AG04450 (cell line): ENCODE measurements at regions of chr1 and their contacts with region 1.

Region 1: GRCh38 chr1:150162862-150163706 is 13.4 kb downstream of the PLEKHO1 start:
- DNase-seq: peak; percentile 99
- H3K4me3 ChIP-seq: peak overlapping the region; percentile 30; the same call in 1 of the 2 replicates
- H3K27ac ChIP-seq: peak overlapping the region; percentile 99
- H3K27me3 ChIP-seq: no peaks in the 10 kb centered on the region
- CTCF ChIP-seq: no peak; the same call in 1 of the 2 replicates

Region 2: DNA sequence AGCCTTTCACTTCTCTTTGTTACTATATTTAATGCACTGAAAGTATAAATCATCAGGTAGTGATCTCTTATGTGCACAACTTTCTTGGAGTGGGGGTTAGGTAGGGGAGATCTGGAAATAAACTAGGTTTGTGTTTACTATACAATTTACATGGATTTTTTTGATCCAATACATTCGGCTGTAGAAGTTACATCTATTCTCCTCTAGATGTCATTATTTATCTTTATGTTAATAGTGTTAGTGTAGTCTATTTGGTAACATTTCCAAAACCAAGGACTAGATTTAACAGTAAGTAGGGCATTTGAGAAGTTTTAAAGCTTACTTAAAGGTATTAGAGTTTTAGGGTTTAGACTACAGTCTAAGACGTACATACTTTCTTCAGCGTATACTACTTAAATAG is 90.1 kb before region 1 on chr1:
- CTCF ChIA-PET with region 1: interaction called, 238 read pairs
- POLR2A ChIA-PET with region 1: interaction called, 4 read pairs
- DNase-seq: no peak
- H3K4me3 ChIP-seq: no peak overlapping the region
- H3K27ac ChIP-seq: no peak overlapping the region
- H3K27me3 ChIP-seq: no peaks in the 10 kb centered on the region
- CTCF ChIP-seq: peak; percentile 46